ENCODE measurements at regions of chr9 and their contacts with region 1.

Region 1: DNA sequence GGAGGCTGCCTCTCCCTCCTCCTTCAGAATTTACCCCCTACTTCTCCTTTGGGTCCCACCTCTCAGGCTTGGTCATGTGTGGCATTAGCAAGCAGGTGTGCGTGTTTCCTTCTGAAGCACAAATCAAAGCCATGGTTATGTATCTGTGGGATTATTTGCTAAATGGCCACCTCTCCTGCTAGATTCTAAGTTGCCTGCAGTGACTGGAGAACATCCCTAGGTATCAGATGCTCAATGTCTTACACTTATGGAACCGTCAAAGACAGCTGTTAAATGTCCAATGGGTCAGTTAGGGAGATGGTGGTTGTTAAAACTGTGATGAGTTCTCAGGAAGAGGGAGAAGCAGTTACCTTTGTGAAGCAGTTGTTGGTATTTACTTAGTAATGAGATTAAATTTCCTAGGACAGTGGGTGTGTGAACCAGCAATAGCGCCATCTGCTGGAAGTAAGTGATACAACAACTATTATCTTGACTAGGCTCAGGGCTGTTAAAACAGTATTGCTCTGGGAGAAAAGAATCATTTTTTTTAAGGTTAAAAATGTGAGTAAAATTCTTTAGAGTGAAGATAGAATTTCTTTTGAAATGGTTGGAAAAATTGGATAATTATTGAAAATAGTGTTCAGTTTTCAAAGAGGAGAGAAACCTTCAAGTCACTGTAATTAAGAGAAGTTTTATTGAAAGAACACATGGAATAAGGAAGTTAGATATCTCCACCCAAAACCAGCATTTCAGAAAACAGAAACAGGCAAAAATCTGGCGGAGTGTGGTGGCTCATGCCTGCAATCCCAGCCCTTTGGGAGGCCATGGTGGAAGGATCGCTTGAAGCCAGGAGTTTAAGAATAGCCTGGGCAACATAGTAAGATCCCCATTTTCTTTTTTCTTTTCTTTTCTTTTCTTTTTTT is 71.3 kb downstream of the TMC1 start:
- DNase-seq: peak; percentile 37 to 67
- H3K4me3 ChIP-seq: no peak overlapping the region
- H3K27ac ChIP-seq: 0 out of 2 replicates have a peak overlapping the region, but pooled peaks have one; percentile 31
- H3K4me1 ChIP-seq: peaks cover 27% of the 10 kb centered on the region
- H3K27me3 ChIP-seq: no peaks in the 10 kb centered on the region
- CTCF ChIP-seq: peak; percentile 96

Region 2: DNA sequence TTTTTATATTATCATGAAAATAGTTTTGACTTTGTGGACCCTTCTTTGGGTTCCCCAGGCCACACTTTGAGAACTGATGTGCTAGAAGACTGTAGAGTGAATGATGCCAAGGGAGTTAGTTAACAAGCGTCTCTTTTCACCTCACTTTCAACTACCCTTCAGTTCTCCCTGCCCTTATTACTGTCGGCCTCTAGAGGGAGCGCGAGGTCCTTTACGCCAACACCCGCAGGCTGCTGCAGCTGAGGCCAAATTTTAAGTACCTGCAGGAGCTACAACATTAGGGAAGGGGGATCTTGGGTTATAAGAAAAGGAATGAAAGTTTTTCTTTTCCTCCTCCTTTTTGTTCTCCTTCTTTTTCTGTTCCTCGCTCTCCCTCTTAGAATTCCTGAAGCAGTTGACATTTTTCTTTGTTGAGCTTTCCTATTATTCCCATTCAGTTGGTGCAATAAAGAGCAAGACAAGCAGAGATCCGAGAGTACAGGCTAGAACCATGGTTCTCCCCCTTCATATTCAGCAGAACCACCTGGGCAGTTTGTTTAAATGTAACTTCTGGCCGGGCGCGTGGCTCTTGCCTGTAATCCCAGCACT is 311.7 kb before region 1 on chr9:
- CTCF ChIA-PET with region 1: no interaction called
- POLR2A ChIA-PET with region 1: no interaction called
- intact Hi-C with region 1: loop called (anchors 1 kb)
- DNase-seq: peak; percentile 46 to 72
- H3K4me3 ChIP-seq: no peak overlapping the region
- H3K27ac ChIP-seq: no peak overlapping the region
- H3K4me1 ChIP-seq: no peaks in the 10 kb centered on the region
- H3K27me3 ChIP-seq: no peaks in the 10 kb centered on the region
- CTCF ChIP-seq: peak; percentile 96

Region 3: DNA sequence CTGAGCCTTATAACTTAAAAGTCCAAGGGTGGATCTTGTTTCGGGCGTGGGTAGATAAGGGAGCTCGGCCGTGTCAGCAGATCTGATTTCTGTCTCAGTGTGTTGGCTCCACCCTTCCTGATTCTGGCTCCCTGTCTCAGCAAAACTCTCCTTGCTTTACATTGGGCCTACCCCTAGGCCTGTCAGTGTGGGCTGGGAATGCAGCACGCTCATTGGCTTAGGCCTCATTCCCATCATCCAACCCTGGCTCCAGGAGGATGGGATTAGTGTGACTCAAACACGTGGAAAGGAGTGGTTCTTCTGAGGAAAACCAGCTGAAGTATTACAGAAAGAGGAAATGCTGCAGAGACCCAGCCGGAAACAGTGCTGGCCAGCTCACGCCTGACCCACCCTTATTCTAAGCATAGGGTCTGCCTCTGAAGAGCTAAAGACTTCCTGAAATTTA is 287.6 kb before region 1 on chr9:
- CTCF ChIA-PET with region 1: interaction called, 14 read pairs
- POLR2A ChIA-PET with region 1: no interaction called
- intact Hi-C with region 1: loop called (anchors 5 kb)
- DNase-seq: peak; percentile 88 to 91
- H3K4me3 ChIP-seq: peak overlapping the region; percentile 25; the same call in 1 of the 2 replicates
- H3K27ac ChIP-seq: no peak overlapping the region
- H3K4me1 ChIP-seq: no peaks in the 10 kb centered on the region
- H3K27me3 ChIP-seq: no peaks in the 10 kb centered on the region
- CTCF ChIP-seq: no peak

Region 4: DNA sequence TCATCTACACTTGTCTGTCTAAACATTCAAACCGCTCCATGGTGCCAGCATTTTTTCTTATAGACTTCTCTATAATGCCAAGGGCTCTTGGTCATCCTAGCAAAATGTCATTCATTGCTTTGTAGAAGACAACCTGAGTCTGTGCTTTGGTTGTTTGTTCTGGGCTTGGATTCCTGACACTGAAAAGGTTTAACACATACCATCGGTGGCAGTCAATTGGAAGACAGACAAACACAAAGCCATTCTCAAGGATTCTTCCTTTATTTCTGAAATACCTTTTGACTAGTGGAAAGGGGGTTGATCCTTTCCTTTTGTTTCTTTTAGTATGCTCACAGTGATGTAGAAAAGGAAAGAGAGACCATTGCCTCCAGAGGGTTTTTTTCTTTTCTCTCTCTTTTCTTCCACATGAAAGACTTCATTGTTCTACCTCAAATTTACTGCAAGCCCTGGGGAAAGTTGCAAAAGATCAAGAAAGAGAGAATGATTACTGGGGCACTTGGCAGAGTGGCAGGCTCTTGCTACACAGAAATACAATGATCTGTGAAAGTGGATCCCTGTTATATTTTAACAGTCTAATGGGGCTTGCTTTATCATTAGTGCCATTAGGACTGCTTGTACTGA is 137.8 kb before region 1 on chr9:
- CTCF ChIA-PET with region 1: no interaction called
- POLR2A ChIA-PET with region 1: no interaction called
- intact Hi-C with region 1: no loop called
- DNase-seq: no peak
- H3K4me3 ChIP-seq: no peak overlapping the region
- H3K27ac ChIP-seq: no peak overlapping the region
- H3K4me1 ChIP-seq: peaks cover 18% of the 10 kb centered on the region; the same call in 1 of the 2 replicates
- H3K27me3 ChIP-seq: no peaks in the 10 kb centered on the region
- CTCF ChIP-seq: no peak

Region 5: DNA sequence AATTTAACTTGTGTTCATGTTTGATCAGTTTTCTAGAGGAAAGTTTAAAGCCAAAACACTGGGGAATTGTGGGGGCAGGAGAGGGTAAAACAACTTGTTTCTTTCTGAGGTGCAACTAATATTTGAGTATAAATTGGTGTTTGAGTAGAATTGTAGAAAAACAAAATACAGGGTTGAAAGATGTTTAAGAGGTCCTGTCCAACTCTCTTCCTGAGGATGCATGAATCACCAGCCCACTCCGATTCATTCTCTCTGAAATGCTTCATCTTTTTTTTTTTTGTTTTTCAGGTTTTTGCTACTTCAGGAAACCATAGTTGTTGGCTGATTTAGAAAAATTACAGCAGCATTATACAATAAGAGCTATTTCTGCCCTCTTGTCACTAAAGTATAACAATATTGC is 113.8 kb before region 1 on chr9:
- CTCF ChIA-PET with region 1: no interaction called
- POLR2A ChIA-PET with region 1: no interaction called
- intact Hi-C with region 1: loop called (anchors 1 kb)
- DNase-seq: no peak
- H3K4me3 ChIP-seq: no peak overlapping the region
- H3K27ac ChIP-seq: peak overlapping the region; percentile 94
- H3K4me1 ChIP-seq: peaks cover 47% of the 10 kb centered on the region
- H3K27me3 ChIP-seq: no peaks in the 10 kb centered on the region
- CTCF ChIP-seq: no peak

Region 6: DNA sequence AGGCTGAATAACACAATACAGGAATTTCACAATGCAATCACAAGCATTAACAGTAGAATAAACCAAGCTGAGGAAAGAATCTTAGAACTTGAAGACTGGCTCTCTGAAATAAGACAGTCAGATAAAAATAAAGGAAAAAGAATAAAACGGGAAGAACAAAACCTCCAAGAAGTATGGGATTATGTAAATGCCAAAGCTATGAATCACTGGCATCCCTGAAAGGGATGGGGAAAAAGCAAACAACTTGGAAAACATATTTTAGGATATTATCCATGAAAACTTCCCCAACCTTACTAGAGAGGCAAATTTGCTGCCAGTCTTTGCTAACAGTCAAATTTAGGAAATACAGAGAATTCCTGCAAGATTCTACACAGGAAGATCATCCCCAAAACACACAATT is 202.2 kb after region 1 on chr9:
- CTCF ChIA-PET with region 1: no interaction called
- POLR2A ChIA-PET with region 1: no interaction called
- intact Hi-C with region 1: no loop called
- DNase-seq: no peak
- H3K4me3 ChIP-seq: no peak overlapping the region
- H3K27ac ChIP-seq: no peak overlapping the region
- H3K4me1 ChIP-seq: no peaks in the 10 kb centered on the region
- H3K27me3 ChIP-seq: no peaks in the 10 kb centered on the region
- CTCF ChIP-seq: no peak

Region 7: GRCh38 chr9:72817413-72817812 is 224.7 kb after region 1 on chr9:
- CTCF ChIA-PET with region 1: interaction called, 14 read pairs
- POLR2A ChIA-PET with region 1: no interaction called
- intact Hi-C with region 1: loop called (anchors 1 kb)
- DNase-seq: no peak
- H3K4me3 ChIP-seq: no peak overlapping the region
- H3K27ac ChIP-seq: no peak overlapping the region
- H3K4me1 ChIP-seq: no peaks in the 10 kb centered on the region; the same call in 1 of the 2 replicates
- H3K27me3 ChIP-seq: no peaks in the 10 kb centered on the region
- CTCF ChIP-seq: no peak